Tibial artery (tissue), 4 donors: ENCODE measurements at regions of chr15 and their contacts with region 1.

Region 1: GRCh38 chr15:88476635-88477060 is 9.1 kb downstream of the MRPS11 start:
- DNase-seq: no peak
- H3K4me3 ChIP-seq: no peak overlapping the region
- H3K27ac ChIP-seq: no peak overlapping the region
- H3K4me1 ChIP-seq: no peaks in the 10 kb centered on the region
- H3K27me3 ChIP-seq: no peaks in the 10 kb centered on the region
- CTCF ChIP-seq: peak; percentile 26 to 40

Region 2: GRCh38 chr15:88834211-88834812 is 357.7 kb after region 1 on chr15:
- intact Hi-C with region 1: loop called (anchors 10 kb)
- DNase-seq: peak; percentile 52 to 83
- H3K4me3 ChIP-seq: no peak overlapping the region
- H3K27ac ChIP-seq: peak overlapping the region; percentile 78 to 85
- H3K4me1 ChIP-seq: peaks cover 0 to 23% (median 16%) of the 10 kb centered on the region in 4 donors
- H3K27me3 ChIP-seq: no peaks in the 10 kb centered on the region
- CTCF ChIP-seq: peak; percentile 79 to 84